ENCODE measurements at regions of chr7 and their contacts with region 1.

Region 1: GRCh38 chr7:24898691-24899090 is 81.3 kb downstream of the OSBPL3 start:
- DNase-seq: no peak
- H3K4me3 Mint-ChIP-seq: no peak overlapping the region
- H3K27ac Mint-ChIP-seq: peak overlapping the region; percentile 67
- H3K4me1 Mint-ChIP-seq: peaks cover 79% of the 10 kb centered on the region
- H3K27me3 Mint-ChIP-seq: no peaks in the 10 kb centered on the region

Region 2: GRCh38 chr7:24877790-24878311 is 20.8 kb before region 1 on chr7:
- CTCF ChIA-PET with region 1: interaction called, 4 read pairs
- POLR2A ChIA-PET with region 1: interaction called, 3 read pairs
- intact Hi-C with region 1: loop called (anchors 1 kb)
- DNase-seq: peak; percentile 46
- H3K4me3 Mint-ChIP-seq: peak overlapping the region; percentile 38
- H3K27ac Mint-ChIP-seq: peak overlapping the region; percentile 61
- H3K4me1 Mint-ChIP-seq: peaks cover 55% of the 10 kb centered on the region
- H3K27me3 Mint-ChIP-seq: no peaks in the 10 kb centered on the region

Region 3: GRCh38 chr7:24882989-24883621 is 15.6 kb before region 1 on chr7:
- CTCF ChIA-PET with region 1: interaction called, 4 read pairs
- POLR2A ChIA-PET with region 1: interaction called, 5 read pairs
- intact Hi-C with region 1: loop called (anchors 1 kb)
- DNase-seq: peak; percentile 75
- H3K4me3 Mint-ChIP-seq: no peak overlapping the region
- H3K27ac Mint-ChIP-seq: peak overlapping the region; percentile 57
- H3K4me1 Mint-ChIP-seq: peaks cover 78% of the 10 kb centered on the region
- H3K27me3 Mint-ChIP-seq: no peaks in the 10 kb centered on the region